Sciatic nerve (tissue), 2 donors: ENCODE measurements at regions of chr16 and their contacts with region 1.

Region 1: GRCh38 chr16:27232901-27233625 is 29.7 kb downstream of the KDM8 start:
- DNase-seq: no peak
- ATAC-seq: no peak

Region 2: GRCh38 chr16:27208796-27209195 is 24.3 kb before region 1 on chr16:
- intact Hi-C with region 1: loop called (anchors 1 kb)
- DNase-seq: no peak
- ATAC-seq: no peak

Region 3: GRCh38 chr16:27566417-27566816 is 333.4 kb after region 1 on chr16:
- intact Hi-C with region 1: no loop called
- DNase-seq: no peak
- ATAC-seq: no peak